GM12878 (cell line): ENCODE measurements at regions of chr1 and their contacts with region 1.

Region 1: GRCh38 chr1:88973520-88974137 is 18.8 kb downstream of the KYAT3 start:
- DNase-seq: no peak
- ATAC-seq: peak; percentile 74
- H3K4me3 ChIP-seq: no peak overlapping the region
- H3K27ac ChIP-seq: no peak overlapping the region
- H3K4me1 ChIP-seq: peaks cover 4% of the 10 kb centered on the region
- H3K27me3 ChIP-seq: no peaks in the 10 kb centered on the region
- CTCF ChIP-seq: peak; percentile 39 to 63 (median 52); a peak in 5 of 6 replicates
- EP300 ChIP-seq: no peak
- POLR2A ChIP-seq: no peak
- RAD21 ChIP-seq: peak; percentile 62

Region 2: DNA sequence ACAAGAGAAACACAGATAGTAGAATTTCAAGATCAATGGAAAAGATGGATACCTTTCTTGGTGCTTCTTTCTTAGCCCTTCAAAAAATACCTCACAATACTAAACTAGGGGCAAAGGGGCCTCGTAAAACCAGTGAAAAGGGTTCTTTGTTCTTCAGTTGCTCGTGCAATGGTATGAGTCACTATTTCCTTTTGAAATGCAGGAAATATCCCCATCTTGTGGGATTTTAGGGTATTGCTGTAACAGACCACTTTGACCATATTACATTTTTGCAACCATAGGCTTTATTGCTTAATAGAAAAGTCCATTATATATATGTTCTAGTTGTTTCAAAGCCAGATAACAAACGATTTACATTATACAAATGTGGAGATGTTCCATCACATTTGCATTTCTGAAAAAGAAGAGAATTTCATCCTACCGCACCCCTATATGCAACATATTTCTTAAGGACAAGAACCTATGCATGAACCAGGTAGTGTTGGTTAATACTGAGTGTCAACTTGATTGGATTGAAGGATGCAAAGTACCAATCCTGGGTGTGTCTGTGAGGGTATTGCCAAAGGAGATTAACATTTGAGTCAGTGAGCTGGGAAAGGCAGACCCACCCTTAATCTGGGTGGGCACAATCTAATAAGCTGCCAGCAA is 378.1 kb before region 1 on chr1:
- CTCF ChIA-PET with region 1: no interaction called
- POLR2A ChIA-PET with region 1: no interaction called
- RAD21 ChIA-PET with region 1: no interaction called
- SMC1A ChIA-PET with region 1: no interaction called
- in situ Hi-C with region 1: no loop called
- intact Hi-C with region 1: no loop called
- DNase-seq: peak; percentile 12
- ATAC-seq: peak; percentile 39
- H3K4me3 ChIP-seq: no peak overlapping the region
- H3K27ac ChIP-seq: no peak overlapping the region
- H3K4me1 ChIP-seq: no peaks in the 10 kb centered on the region
- H3K27me3 ChIP-seq: no peaks in the 10 kb centered on the region
- CTCF ChIP-seq: peak; percentile 20 to 53 (median 33); a peak in 5 of 6 replicates
- EP300 ChIP-seq: no peak
- POLR2A ChIP-seq: no peak
- RAD21 ChIP-seq: peak; percentile 69

Region 3: GRCh38 chr1:88763649-88764406 is 209.8 kb before region 1 on chr1:
- CTCF ChIA-PET with region 1: no interaction called
- POLR2A ChIA-PET with region 1: no interaction called
- RAD21 ChIA-PET with region 1: no interaction called
- SMC1A ChIA-PET with region 1: no interaction called
- in situ Hi-C with region 1: no loop called
- intact Hi-C with region 1: no loop called
- DNase-seq: no peak
- ATAC-seq: no peak
- H3K4me3 ChIP-seq: no peak overlapping the region
- H3K27ac ChIP-seq: no peak overlapping the region
- H3K4me1 ChIP-seq: no peaks in the 10 kb centered on the region
- H3K27me3 ChIP-seq: no peaks in the 10 kb centered on the region
- CTCF ChIP-seq: no peak
- EP300 ChIP-seq: no peak
- POLR2A ChIP-seq: no peak
- RAD21 ChIP-seq: no peak

Region 4: DNA sequence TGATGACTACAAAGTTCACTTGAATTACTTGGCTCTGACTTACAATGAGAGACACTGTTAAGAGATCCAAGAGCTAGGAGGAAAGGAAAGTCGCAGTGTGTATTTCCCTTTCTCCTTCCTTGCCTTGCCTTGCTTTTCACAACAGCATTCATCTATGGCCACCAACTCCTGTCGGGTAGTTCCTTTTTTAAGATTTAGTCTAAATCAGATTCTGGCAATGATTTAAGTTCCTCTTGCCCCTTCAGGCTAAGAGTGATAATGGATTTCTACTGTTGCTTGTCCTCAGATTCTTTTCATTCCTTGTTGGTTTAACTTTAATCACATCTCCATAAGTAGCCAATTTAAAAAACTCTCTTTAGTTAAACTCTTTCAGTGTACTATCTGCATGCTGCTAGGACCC is 174.1 kb before region 1 on chr1:
- CTCF ChIA-PET with region 1: no interaction called
- POLR2A ChIA-PET with region 1: no interaction called
- RAD21 ChIA-PET with region 1: no interaction called
- SMC1A ChIA-PET with region 1: no interaction called
- in situ Hi-C with region 1: no loop called
- intact Hi-C with region 1: no loop called
- DNase-seq: no peak
- ATAC-seq: no peak
- H3K4me3 ChIP-seq: no peak overlapping the region
- H3K27ac ChIP-seq: no peak overlapping the region
- H3K4me1 ChIP-seq: no peaks in the 10 kb centered on the region
- H3K27me3 ChIP-seq: no peaks in the 10 kb centered on the region
- CTCF ChIP-seq: no peak
- EP300 ChIP-seq: no peak
- POLR2A ChIP-seq: no peak
- RAD21 ChIP-seq: no peak

Region 5: DNA sequence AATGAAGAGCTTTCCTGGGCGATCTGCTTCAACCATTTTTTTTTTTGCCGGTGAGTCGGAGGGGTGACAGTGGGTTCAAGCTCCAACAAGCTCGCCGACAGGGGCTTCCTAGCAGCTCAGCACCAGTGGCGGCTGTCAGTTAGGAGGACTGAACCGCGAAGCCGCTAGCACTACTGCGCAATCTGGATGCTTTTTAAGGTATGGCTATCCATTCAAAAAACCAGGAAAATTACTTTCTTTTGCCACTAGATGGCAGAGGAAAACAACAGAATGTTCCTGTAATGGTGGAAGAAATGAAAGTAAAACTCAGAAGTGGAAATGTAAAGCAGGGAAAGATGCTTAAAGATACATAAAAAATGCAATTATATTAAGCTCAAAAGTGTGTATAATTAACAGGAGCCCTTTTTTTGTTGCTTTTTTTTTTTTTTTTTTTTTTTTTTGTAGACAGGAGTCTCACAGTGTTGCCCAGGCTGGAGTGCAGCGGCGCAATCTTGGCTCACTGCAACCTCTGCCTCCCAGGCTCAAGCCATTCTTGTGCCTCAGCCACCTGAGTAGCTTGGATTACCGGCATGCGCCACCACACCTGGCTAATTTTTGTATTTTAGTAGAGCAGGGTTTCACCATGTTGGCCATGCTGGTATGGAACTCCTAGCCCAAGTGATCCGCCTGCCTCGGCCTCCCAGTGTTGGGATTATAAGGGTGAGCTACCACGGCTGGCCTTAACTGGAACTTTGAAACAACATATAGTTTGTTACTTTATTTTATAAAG is 10.3 kb after region 1 on chr1:
- CTCF ChIA-PET with region 1: interaction called, 36 read pairs
- POLR2A ChIA-PET with region 1: interaction called, 5 read pairs
- RAD21 ChIA-PET with region 1: interaction called, 5 read pairs
- SMC1A ChIA-PET with region 1: interaction called, 26 read pairs
- in situ Hi-C with region 1: no loop called
- intact Hi-C with region 1: no loop called
- DNase-seq: no peak
- ATAC-seq: peak; percentile 54
- H3K4me3 ChIP-seq: no peak overlapping the region
- H3K27ac ChIP-seq: peak overlapping the region; percentile 27; the same call in 1 of the 2 replicates
- H3K4me1 ChIP-seq: peaks cover 7% of the 10 kb centered on the region
- H3K27me3 ChIP-seq: no peaks in the 10 kb centered on the region
- CTCF ChIP-seq: peak; percentile 44 to 55 (median 45); a peak in 5 of 6 replicates
- EP300 ChIP-seq: no peak
- POLR2A ChIP-seq: no peak
- RAD21 ChIP-seq: peak; percentile 43

Region 6: DNA sequence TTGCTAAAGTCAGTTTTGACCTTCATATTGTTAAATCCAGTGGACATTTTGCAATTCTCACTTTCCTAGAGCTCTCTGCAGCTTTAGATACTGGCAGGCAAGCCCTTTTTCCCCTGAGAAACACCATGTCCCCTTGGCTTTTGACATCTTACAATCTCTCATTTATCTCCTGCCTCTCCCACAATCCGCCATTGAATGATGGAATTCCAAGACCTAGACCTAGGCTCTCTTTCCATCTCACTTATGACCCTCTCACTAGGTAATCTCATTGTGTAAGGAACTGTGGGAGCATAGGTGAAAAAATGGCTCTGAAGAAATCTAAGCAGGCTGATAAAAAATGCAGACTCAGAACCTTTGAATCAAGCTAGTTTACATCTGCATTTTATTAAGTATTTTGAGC is 16.8 kb after region 1 on chr1:
- CTCF ChIA-PET with region 1: interaction called, 35 read pairs
- POLR2A ChIA-PET with region 1: interaction called, 5 read pairs
- RAD21 ChIA-PET with region 1: interaction called, 3 read pairs
- SMC1A ChIA-PET with region 1: interaction called, 5 read pairs
- in situ Hi-C with region 1: no loop called
- intact Hi-C with region 1: no loop called
- DNase-seq: no peak
- ATAC-seq: no peak
- H3K4me3 ChIP-seq: peak overlapping the region; percentile 43
- H3K27ac ChIP-seq: no peak overlapping the region
- H3K4me1 ChIP-seq: peaks cover 6% of the 10 kb centered on the region
- H3K27me3 ChIP-seq: no peaks in the 10 kb centered on the region
- CTCF ChIP-seq: no peak
- EP300 ChIP-seq: no peak
- POLR2A ChIP-seq: no peak
- RAD21 ChIP-seq: no peak

Region 7: GRCh38 chr1:89369331-89369730 is 395.7 kb after region 1 on chr1:
- CTCF ChIA-PET with region 1: no interaction called
- POLR2A ChIA-PET with region 1: no interaction called
- RAD21 ChIA-PET with region 1: no interaction called
- SMC1A ChIA-PET with region 1: no interaction called
- in situ Hi-C with region 1: no loop called
- intact Hi-C with region 1: no loop called
- DNase-seq: no peak
- ATAC-seq: no peak
- H3K4me3 ChIP-seq: no peak overlapping the region
- H3K27ac ChIP-seq: no peak overlapping the region
- H3K4me1 ChIP-seq: no peaks in the 10 kb centered on the region
- H3K27me3 ChIP-seq: no peaks in the 10 kb centered on the region
- CTCF ChIP-seq: no peak
- EP300 ChIP-seq: no peak
- POLR2A ChIP-seq: no peak
- RAD21 ChIP-seq: no peak